Heart left ventricle (tissue), 16 donors: ENCODE measurements at regions of chr22 and their contacts with region 1.

Region 1: DNA sequence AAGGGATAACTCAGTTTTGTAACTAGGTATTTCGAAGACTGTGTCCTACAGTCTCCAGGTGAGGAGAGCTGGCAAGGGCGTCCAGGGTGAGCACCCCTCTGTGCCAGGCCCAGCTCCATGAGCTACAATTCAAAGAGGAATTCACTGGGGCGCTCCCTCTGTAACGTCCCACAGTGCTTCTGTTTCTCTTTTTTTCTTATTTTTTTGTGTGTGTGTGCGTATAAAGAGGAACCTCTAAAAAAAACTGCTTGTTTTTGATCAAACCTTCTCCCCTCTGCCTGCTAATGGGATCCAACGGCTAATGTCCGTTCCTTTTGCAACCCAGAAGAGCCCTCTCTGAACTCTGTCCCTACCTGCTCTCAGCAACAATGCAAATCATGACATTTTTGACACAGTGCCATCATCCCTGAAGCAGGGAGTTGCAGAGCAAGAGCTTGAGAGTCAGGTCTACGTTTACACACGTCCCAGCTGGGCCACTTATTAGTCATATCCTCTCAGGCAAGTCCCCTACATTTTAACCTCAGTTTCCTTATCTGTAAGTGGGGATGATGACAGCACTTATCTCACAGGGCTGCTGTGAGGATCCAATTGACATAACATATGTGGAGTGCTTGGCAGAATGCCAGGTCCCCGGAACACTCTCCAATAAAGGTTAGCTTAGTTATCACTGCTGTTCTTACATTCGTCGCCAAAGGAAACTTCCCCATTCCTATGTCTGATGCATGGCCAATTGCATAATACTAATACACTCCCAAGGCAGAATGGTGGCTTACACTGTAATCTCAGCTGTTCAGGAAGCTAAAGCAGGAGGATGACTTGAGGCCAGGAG is 16.9 kb downstream of the ASCC2 start:
- DNase-seq: peak; percentile 80 to 95 (median 89)
- ATAC-seq: peak; percentile 72 to 95 (median 94)
- H3K4me3 ChIP-seq: no peak overlapping the region
- H3K27ac ChIP-seq: peak overlapping the region in 11 of 12 donors; percentile 40 to 90 (median 57)
- H3K4me1 ChIP-seq: peaks cover 0 to 39% (median 32%) of the 10 kb centered on the region in 12 donors
- H3K27me3 ChIP-seq: no peaks in the 10 kb centered on the region
- CTCF ChIP-seq: no peak
- POLR2A ChIP-seq: no peak

Region 2: GRCh38 chr22:29798801-29799680 is 22.1 kb before region 1 on chr22:
- intact Hi-C with region 1: loop called in 1 of 10 experiments (anchors 1 kb)
- DNase-seq: peak; percentile 88 to 96 (median 91)
- ATAC-seq: peak; percentile 92 to 98 (median 98)
- H3K4me3 ChIP-seq: peak overlapping the region in 6 of 12 donors; percentile 2 to 28 (median 13)
- H3K27ac ChIP-seq: peak overlapping the region; percentile 81 to 93 (median 87)
- H3K4me1 ChIP-seq: peaks cover 5 to 52% (median 26%) of the 10 kb centered on the region in 12 donors
- H3K27me3 ChIP-seq: no peaks in the 10 kb centered on the region
- CTCF ChIP-seq: peak in 3 of 12 donors; percentile 7 to 19 (median 9)
- POLR2A ChIP-seq: peak in 1 of 2 donors; percentile 11

Region 3: DNA sequence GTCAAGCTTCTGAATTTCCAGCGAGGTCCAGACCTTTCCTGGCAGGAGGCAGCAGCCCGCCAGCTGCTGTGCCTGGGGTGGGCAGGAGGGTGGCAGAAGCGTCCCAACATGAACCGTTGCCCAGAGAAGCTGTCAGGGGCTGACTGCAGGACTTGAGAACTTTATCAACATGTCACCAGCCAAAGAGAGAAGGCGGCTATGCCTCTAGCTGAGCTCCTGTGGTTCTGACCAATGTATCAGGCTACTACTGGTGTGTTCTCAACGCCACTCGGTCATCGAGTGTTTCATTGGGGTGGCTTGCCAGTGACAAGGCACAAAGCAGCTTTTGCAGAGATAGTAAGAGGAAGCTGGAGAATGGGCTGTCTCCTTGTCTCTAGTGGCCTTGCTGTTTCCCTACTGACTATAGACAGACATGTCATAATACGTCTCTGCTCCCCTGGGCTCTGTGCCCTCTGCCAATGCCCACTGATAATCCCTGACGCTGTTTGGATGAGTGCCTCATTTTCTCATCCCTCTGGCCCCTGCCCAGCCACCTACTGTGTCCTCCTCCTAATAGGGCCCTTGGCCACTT is 34.5 kb after region 1 on chr22:
- intact Hi-C with region 1: no loop called
- DNase-seq: peak; percentile 71 to 89 (median 82)
- ATAC-seq: peak; percentile 95 to 98 (median 96)
- H3K4me3 ChIP-seq: no peak overlapping the region
- H3K27ac ChIP-seq: peak overlapping the region in 11 of 12 donors; percentile 4 to 96 (median 65)
- H3K4me1 ChIP-seq: peaks cover 0 to 10% (median 0%) of the 10 kb centered on the region in 12 donors
- H3K27me3 ChIP-seq: no peaks in the 10 kb centered on the region
- CTCF ChIP-seq: peak in 7 of 12 donors; percentile 11 to 47 (median 32)
- POLR2A ChIP-seq: no peak

Region 4: GRCh38 chr22:29925402-29925801 is 104.2 kb after region 1 on chr22:
- intact Hi-C with region 1: no loop called
- DNase-seq: no peak
- ATAC-seq: no peak
- H3K4me3 ChIP-seq: no peak overlapping the region
- H3K27ac ChIP-seq: no peak overlapping the region
- H3K4me1 ChIP-seq: peaks cover 0 to 26% (median 5%) of the 10 kb centered on the region in 12 donors
- H3K27me3 ChIP-seq: no peaks in the 10 kb centered on the region
- CTCF ChIP-seq: no peak
- POLR2A ChIP-seq: no peak

Region 5: GRCh38 chr22:29956680-29957079 is 135.5 kb after region 1 on chr22:
- intact Hi-C with region 1: no loop called
- DNase-seq: no peak
- ATAC-seq: no peak
- H3K4me3 ChIP-seq: no peak overlapping the region
- H3K27ac ChIP-seq: no peak overlapping the region
- H3K4me1 ChIP-seq: peaks cover 0 to 18% (median 8%) of the 10 kb centered on the region in 12 donors
- H3K27me3 ChIP-seq: no peaks in the 10 kb centered on the region
- CTCF ChIP-seq: no peak
- POLR2A ChIP-seq: no peak

Region 6: GRCh38 chr22:29994027-29994715 is 173.0 kb after region 1 on chr22:
- intact Hi-C with region 1: loop called in 1 of 10 experiments (anchors 5 kb)
- DNase-seq: no peak
- ATAC-seq: no peak
- H3K4me3 ChIP-seq: no peak overlapping the region
- H3K27ac ChIP-seq: peak overlapping the region in 1 of 12 donors; percentile 50
- H3K4me1 ChIP-seq: peaks cover 0 to 33% (median 12%) of the 10 kb centered on the region in 12 donors
- H3K27me3 ChIP-seq: no peaks in the 10 kb centered on the region
- CTCF ChIP-seq: no peak
- POLR2A ChIP-seq: no peak

Region 7: DNA sequence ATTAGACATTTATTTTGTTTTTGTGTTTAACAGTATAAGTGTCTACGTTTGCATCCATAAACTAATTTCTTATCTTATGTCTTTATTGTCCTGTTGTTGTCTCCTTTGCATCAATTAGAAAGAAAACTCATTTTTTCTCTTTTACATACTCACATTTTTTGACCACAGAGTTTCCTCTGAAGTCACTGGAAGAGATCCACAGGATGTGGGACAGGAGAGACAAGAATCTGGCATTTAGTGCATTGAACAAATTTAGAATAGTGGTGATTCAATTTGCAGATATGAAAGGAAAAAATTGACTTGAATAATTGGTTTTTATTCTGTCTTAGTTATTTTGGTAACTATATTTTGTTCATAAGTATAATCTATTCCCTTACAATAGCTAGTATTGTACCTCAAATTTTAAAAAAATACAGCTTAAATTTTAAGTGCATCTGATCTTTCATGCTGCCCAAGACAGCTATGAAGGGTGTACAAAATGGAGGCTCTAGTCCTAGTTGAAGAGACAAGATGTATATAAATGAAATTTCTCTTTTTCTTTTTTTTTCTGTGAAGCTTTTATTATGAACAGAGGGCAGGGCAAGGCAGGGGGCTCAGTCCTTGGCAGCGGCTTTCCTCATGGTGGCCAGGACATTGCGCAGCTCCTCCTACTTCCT is 283.5 kb after region 1 on chr22:
- intact Hi-C with region 1: no loop called
- DNase-seq: no peak
- ATAC-seq: no peak
- H3K4me3 ChIP-seq: no peak overlapping the region
- H3K27ac ChIP-seq: no peak overlapping the region
- H3K4me1 ChIP-seq: no peaks in the 10 kb centered on the region
- H3K27me3 ChIP-seq: peaks cover 0 to 22% (median 0%) of the 10 kb centered on the region in 9 donors
- CTCF ChIP-seq: no peak
- POLR2A ChIP-seq: no peak